Body of pancreas (tissue), 4 donors: ENCODE measurements at regions of chr12 and their contacts with region 1.

Region 1: DNA sequence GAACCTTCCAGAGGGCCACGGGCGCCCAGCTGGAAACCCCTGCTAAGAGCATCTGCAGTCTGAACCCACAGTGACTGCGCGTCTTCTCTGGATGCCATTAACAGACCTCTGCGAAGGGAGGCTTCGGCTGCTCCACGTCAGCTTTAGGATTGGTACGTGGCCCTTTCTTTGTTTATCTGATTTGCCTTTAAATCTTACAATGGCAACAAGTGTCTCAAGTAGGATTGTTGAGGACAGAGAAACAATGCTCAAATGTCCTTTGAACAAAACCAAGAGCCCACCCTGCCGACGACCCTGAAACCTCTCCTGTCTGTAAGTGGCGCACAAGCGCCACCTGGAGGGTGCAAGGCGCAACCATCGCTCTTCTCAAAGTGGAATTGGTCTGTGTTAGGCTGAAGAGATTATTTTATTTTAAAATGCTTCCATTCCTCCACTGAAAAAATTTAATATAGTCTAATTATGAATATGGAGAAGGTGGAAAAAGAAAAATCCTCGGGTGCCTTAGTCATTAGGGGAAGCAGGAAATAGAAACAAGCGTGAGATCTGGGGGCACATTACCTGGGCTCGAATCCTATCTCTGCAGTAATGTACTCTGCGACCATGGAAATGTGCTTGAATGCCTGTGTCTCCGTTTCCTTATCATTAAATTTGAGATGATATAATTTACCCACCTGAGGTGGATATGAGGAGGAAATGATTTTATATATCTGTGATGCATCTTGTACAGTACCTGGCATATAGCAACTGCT is 82.6 kb upstream of the PTPRB start:
- DNase-seq: peak in 3 of 4 donors; percentile 7 to 33 (median 21)
- ATAC-seq: peak; percentile 53
- H3K4me3 ChIP-seq: no peak overlapping the region
- H3K27ac ChIP-seq: no peak overlapping the region
- H3K4me1 ChIP-seq: peaks cover 4% of the 10 kb centered on the region
- H3K27me3 ChIP-seq: no peaks in the 10 kb centered on the region
- CTCF ChIP-seq: peak; percentile 59 to 81 (median 69)
- POLR2A ChIP-seq: no peak

Region 2: DNA sequence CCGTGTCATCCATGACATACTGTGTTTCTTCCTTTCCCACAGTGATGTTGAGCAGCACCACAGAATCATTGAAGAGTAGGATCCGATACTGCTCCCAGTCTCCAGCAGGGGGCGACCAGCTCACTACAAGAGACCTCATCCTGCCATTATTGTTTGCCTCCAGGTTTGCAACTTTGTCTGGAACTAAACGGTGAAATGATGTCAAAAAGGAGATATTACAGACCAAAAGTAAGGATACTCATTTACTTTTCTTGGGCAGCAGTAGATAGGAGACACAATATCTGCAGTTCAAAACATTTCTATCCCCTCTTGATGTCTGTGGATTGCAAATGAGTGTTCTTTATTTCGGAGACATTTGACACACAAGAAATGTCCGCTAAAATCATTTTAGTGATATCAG is 129.8 kb before region 1 on chr12:
- intact Hi-C with region 1: loop called (anchors 5 kb)
- DNase-seq: peak; percentile 71 to 83 (median 74)
- ATAC-seq: peak; percentile 77
- H3K4me3 ChIP-seq: no peak overlapping the region
- H3K27ac ChIP-seq: no peak overlapping the region
- H3K4me1 ChIP-seq: no peaks in the 10 kb centered on the region
- H3K27me3 ChIP-seq: no peaks in the 10 kb centered on the region
- CTCF ChIP-seq: peak; percentile 62 to 83 (median 74)
- POLR2A ChIP-seq: no peak

Region 3: GRCh38 chr12:70812151-70812550 is 92.3 kb after region 1 on chr12:
- intact Hi-C with region 1: no loop called
- DNase-seq: no peak
- ATAC-seq: no peak
- H3K4me3 ChIP-seq: no peak overlapping the region
- H3K27ac ChIP-seq: no peak overlapping the region
- H3K4me1 ChIP-seq: no peaks in the 10 kb centered on the region
- H3K27me3 ChIP-seq: no peaks in the 10 kb centered on the region
- CTCF ChIP-seq: no peak
- POLR2A ChIP-seq: no peak

Region 4: GRCh38 chr12:70831538-70831937 is 111.7 kb after region 1 on chr12:
- intact Hi-C with region 1: no loop called
- DNase-seq: no peak
- ATAC-seq: no peak
- H3K4me3 ChIP-seq: no peak overlapping the region
- H3K27ac ChIP-seq: no peak overlapping the region
- H3K4me1 ChIP-seq: no peaks in the 10 kb centered on the region
- H3K27me3 ChIP-seq: no peaks in the 10 kb centered on the region
- CTCF ChIP-seq: no peak
- POLR2A ChIP-seq: no peak